PC-9 (cell line): ENCODE measurements at regions of chr2 and their contacts with region 1.

Region 1: GRCh38 chr2:101328474-101329007 is 20.0 kb upstream of the RNF149 start:
- DNase-seq: peak in 1 of 2 experiments; percentile 94
- H3K4me3 ChIP-seq: peak overlapping the region; percentile 54
- H3K27ac ChIP-seq: peak overlapping the region; percentile 99
- H3K4me1 ChIP-seq: peaks cover 49% of the 10 kb centered on the region
- H3K27me3 ChIP-seq: no peaks in the 10 kb centered on the region
- CTCF ChIP-seq: no peak

Region 2: GRCh38 chr2:100365434-100365833 is 963.1 kb before region 1 on chr2:
- CTCF ChIA-PET with region 1: no interaction called
- POLR2A ChIA-PET with region 1: interaction called, 10 read pairs
- intact Hi-C with region 1: no loop called
- DNase-seq: peak; percentile 5 to 35
- H3K4me3 ChIP-seq: no peak overlapping the region
- H3K27ac ChIP-seq: no peak overlapping the region
- H3K4me1 ChIP-seq: no peaks in the 10 kb centered on the region
- H3K27me3 ChIP-seq: no peaks in the 10 kb centered on the region
- CTCF ChIP-seq: no peak

Region 3: DNA sequence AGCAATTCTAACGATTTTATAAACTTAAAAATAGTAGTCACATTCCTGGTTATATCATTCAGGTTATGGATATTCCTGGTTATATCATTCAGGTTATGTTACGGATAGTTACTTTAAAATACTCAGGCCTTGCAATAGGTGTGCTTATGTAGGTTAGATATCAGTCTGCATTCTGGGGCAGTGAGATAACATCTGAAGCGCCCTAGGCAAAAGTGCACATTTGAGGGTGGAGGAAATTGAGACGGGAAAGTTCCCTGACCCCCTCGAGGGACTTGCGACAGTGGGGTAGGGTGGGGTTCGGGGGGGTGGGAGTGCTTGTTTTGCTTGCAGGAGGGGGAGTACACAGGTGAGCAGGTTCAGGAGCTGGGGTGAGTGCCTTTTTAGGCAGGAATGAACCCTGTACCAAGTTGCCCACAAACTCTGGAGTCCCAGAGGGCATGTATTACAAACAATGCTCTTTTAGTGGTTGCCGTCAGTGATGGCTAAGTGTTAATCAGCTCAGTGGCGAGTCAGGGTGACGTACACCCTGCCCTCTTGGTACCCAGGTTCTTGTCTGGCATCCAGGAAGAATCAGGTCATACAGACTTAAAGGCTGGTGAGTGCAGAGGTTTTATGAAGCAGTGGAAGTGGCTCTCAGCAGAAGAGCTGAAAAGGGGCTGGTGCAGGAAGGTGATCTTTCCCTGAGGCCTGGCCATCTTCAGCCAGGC is 27.0 kb after region 1 on chr2:
- CTCF ChIA-PET with region 1: no interaction called
- POLR2A ChIA-PET with region 1: no interaction called
- intact Hi-C with region 1: loop called (anchors 1 kb)
- DNase-seq: peak; percentile 75 to 95
- H3K4me3 ChIP-seq: no peak overlapping the region
- H3K27ac ChIP-seq: peak overlapping the region; percentile 56
- H3K4me1 ChIP-seq: peaks cover 57% of the 10 kb centered on the region
- H3K27me3 ChIP-seq: no peaks in the 10 kb centered on the region
- CTCF ChIP-seq: no peak

Region 4: DNA sequence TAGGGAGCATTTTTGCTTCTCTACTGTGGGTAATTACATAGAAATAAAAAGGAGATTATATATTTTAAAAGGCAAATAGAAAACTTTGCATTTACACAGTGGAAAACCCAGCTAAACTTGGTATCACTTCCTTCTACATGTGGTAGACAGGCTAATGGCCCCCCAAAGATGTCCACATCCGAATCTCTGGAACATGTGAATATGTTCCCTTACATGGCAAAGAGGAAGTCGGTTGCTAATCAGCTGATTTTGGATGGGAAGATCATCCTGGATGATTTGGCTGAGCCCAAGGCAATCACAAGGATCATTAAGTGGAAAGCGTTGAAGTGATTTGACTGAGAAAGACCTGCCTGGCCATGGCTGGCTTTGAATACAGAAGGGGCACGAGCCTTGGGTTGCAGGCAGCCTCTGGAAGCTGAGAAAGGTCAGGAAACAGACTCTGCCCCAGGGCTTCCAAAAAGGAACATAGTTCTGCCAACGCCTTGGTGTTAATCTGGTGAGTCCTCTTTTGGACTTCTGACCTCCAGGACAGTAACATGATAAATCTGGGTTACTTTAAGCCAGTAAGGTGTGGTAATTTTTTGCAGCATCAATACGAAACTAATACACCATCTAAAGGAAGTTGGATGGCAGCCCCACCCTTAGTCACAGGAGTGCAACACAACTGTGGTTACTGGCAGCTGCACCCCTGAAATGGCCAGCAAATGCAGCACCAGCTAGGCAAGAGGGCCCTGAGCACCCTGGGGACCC is 32.8 kb after region 1 on chr2:
- CTCF ChIA-PET with region 1: no interaction called
- POLR2A ChIA-PET with region 1: no interaction called
- intact Hi-C with region 1: loop called (anchors 1 kb)
- DNase-seq: peak in 1 of 2 experiments; percentile 52
- H3K4me3 ChIP-seq: no peak overlapping the region
- H3K27ac ChIP-seq: peak overlapping the region; percentile 88
- H3K4me1 ChIP-seq: peaks cover 60% of the 10 kb centered on the region
- H3K27me3 ChIP-seq: no peaks in the 10 kb centered on the region
- CTCF ChIP-seq: no peak